Posterior vena cava (tissue), 2 donors: ENCODE measurements at regions of chr19 and their contacts with region 1.

Region 1: GRCh38 chr19:49443366-49444099 is 2.2 kb upstream of the SLC17A7 start:
- DNase-seq: peak; percentile 98

Region 2: GRCh38 chr19:47854459-47854858 is 1589.1 kb before region 1 on chr19:
- intact Hi-C with region 1: no loop called
- DNase-seq: no peak

Region 3: GRCh38 chr19:49224856-49225255 is 218.7 kb before region 1 on chr19:
- intact Hi-C with region 1: loop called in 1 of 2 experiments (anchors 5 kb)
- DNase-seq: peak; percentile 60

Region 4: GRCh38 chr19:49391581-49392399 is 51.7 kb before region 1 on chr19:
- intact Hi-C with region 1: loop called (anchors 2 to 5 kb)
- DNase-seq: peak; percentile 91

Region 5: DNA sequence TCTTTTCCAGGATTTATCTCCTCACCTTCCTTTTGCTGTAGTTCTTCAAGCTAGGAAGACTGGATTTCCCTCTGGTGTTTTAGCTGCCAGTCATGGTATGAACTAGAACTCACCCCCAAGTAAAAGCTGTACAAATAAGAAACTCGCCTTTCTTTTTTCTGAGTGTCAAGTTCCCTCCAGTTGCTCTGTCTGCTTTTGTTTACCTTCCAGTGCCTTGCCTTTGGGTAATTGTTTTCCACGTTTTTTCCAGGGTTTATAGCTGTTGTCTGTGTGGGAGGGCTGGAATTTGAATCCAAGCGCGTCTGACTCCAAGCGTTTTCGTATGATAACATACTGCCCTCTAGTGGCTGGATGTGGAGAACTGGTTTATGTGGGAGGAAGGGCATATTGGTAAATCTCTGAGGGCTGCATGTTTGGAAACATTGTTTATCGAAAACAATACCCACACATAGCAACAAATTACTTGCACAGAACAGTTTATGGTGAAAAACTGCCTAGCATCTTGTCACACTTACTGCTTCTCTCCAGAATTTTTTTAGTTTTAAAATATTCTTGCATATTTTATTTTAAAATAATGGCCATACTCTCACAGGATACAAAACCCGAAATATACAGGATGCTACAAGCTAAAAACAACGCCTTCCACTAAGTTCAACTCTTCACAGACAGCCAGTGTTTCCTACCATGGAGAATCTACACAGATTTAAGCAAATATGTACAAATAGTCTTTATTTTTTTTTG is 103.5 kb after region 1 on chr19:
- intact Hi-C with region 1: no loop called
- DNase-seq: no peak